ENCODE measurements at regions of chr2 and their contacts with region 1.

Region 1: DNA sequence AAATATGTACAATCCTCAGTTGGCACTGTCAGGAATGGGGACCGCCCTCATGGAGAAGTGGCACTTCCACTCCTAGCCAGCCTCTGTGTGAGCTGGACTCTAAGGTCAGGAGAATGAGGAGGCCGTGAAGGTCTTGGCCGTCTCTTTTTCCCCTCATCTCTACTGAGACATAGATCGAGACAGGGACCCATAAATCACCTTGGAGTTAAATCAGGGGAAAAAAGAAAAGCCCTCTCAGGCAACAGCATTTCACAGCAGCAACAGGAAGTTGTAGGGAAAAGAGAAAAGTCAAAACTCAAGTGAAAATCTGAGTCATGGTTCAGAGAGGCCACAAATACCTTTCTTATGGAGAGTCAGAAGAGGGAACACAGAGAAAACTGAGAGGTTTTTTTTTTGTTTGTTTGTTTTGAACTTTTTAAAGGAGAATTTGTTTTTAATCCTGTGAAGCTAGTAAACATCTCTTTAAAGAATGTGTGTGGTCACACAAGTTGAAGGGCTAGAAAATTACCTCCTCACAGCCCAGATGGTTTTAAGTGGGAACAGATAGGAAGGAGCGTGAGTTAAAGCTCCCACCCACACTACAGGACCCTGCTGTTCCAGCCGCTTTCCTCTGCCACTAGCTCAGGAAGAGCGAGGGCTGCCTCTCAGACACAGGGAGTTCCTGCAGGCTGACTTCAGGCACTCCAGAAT is 30.6 kb upstream of the CYP1B1 start:
- DNase-seq: no peak
- H3K4me3 Mint-ChIP-seq: no peak overlapping the region
- H3K27ac Mint-ChIP-seq: peak overlapping the region; percentile 62
- H3K4me1 Mint-ChIP-seq: peaks cover 28% of the 10 kb centered on the region
- H3K27me3 Mint-ChIP-seq: peaks cover 15% of the 10 kb centered on the region

Region 2: GRCh38 chr2:38037757-38038621 is 68.6 kb before region 1 on chr2:
- intact Hi-C with region 1: loop called (anchors 5 kb)
- DNase-seq: no peak
- H3K4me3 Mint-ChIP-seq: peak overlapping the region; percentile 67
- H3K27ac Mint-ChIP-seq: peak overlapping the region; percentile 90
- H3K4me1 Mint-ChIP-seq: peaks cover 37% of the 10 kb centered on the region
- H3K27me3 Mint-ChIP-seq: peaks cover 24% of the 10 kb centered on the region

Region 3: DNA sequence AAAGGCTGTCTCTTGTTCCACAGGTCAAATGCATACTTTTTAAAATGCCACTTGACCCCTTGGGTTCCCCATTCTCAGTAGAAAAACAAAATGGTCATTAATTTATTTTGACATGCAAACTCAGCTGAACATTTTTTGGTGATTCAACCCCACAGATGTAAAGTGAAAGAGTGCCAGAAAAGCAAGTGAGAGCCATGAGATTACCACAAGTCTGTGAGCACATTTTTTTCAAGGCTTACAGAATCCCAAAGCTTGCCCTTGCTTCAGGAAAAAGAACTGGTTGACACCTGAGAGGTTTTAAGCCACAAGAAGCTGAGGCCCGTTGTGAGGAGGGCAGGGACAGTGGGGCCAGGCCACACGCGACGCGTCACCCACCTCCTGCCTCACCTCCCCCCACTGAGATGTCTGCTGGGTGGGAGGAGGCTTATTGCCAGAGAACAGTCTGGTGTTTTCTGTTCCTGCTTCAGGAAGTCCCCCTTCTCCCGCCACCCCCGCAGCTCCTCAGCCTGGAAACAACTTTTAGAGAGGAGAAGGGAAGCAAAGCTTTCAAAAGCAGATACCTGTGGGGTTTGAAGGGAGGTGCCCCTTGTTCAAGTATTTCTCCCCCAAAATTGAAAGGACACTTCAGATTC is 39.8 kb after region 1 on chr2:
- intact Hi-C with region 1: loop called (anchors 2 kb)
- DNase-seq: no peak
- H3K4me3 Mint-ChIP-seq: no peak overlapping the region
- H3K27ac Mint-ChIP-seq: peak overlapping the region; percentile 47
- H3K4me1 Mint-ChIP-seq: peaks cover 16% of the 10 kb centered on the region
- H3K27me3 Mint-ChIP-seq: no peaks in the 10 kb centered on the region

Region 4: GRCh38 chr2:38214209-38214717 is 107.7 kb after region 1 on chr2:
- intact Hi-C with region 1: no loop called
- DNase-seq: no peak
- H3K4me3 Mint-ChIP-seq: no peak overlapping the region
- H3K27ac Mint-ChIP-seq: no peak overlapping the region
- H3K4me1 Mint-ChIP-seq: peaks cover 7% of the 10 kb centered on the region
- H3K27me3 Mint-ChIP-seq: peaks cover 15% of the 10 kb centered on the region